ENCODE measurements at regions of chr7 and their contacts with region 1.

Region 1: GRCh38 chr7:5677538-5678294 is 103.7 kb downstream of the RNF216 start:
- DNase-seq: peak; percentile 71
- H3K4me3 ChIP-seq: no peak overlapping the region
- H3K27ac ChIP-seq: no peak overlapping the region
- H3K4me1 ChIP-seq: no peaks in the 10 kb centered on the region
- CTCF ChIP-seq: peak; percentile 90

Region 2: DNA sequence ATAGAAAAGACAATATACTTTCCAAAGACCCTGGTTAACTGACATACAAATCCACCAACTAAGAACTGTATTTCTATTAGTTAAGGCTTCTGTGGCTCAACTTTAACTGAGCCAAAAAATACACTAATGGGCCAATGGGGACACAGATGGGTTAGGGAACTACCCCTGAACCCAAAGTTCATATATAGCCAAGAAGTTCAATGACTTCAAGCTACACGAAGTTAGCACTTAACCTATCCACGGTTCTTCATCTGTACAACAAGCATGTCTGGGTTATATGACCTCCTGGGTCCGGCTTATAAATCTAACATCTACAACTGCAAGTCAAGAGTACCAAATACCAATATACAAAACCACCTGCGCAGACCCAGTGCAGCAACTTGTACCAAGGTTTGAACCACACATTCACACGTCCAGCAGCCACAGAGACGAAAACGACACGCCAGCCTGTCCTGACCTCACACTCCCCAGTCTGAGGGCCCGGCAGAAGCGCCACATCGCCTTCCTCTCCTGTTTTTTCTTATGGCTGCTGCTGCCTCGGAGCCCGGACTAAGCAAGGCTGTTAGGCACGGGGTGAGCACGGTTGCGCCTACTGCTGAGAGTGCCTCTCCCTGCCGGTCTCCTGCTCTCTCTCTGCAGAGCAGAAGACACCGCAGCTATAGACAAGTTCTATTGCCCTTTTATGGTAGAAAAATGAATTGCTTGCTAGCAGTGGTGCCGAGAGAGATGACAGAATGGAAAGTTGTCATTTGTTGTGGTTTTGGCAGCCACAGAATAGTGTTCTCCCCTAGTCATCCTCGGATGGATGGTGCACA is 17.4 kb after region 1 on chr7:
- CTCF ChIA-PET with region 1: interaction called, 13 read pairs
- POLR2A ChIA-PET with region 1: interaction called, 9 read pairs
- intact Hi-C with region 1: no loop called
- DNase-seq: peak; percentile 24
- H3K4me3 ChIP-seq: no peak overlapping the region
- H3K27ac ChIP-seq: no peak overlapping the region
- H3K4me1 ChIP-seq: peaks cover 50% of the 10 kb centered on the region
- CTCF ChIP-seq: no peak

Region 3: DNA sequence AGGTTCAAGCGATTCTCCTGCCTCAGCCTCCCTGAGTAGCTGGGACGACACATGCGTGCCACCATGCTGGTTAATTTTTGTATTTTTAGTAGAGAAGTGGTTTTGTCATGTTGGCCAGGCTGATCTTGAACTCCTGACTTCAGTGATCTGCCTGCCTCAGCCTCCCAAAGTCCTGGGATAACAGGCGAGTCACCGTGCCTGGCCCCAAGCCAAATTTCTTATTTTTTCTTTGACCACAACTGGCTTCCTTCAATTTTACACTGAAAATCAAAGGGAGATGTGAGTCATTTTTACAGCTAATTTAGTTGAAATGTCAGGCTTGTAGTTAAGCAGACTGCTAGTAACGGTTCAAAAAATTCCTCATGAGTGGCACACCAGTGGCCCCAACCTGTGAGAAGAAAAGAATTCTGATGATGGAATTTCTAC is 96.0 kb after region 1 on chr7:
- CTCF ChIA-PET with region 1: no interaction called
- POLR2A ChIA-PET with region 1: no interaction called
- intact Hi-C with region 1: no loop called
- DNase-seq: no peak
- H3K4me3 ChIP-seq: no peak overlapping the region
- H3K27ac ChIP-seq: no peak overlapping the region
- H3K4me1 ChIP-seq: peaks cover 18% of the 10 kb centered on the region
- CTCF ChIP-seq: no peak